Endothelial cell of umbilical vein (primary cell): ENCODE measurements at regions of chr18 and their contacts with region 1.

Region 1: GRCh38 chr18:21955757-21956652 is 213.4 kb upstream of the GATA6 start:
- DNase-seq: peak; percentile 66
- H3K4me3 ChIP-seq: no peak overlapping the region
- H3K27ac ChIP-seq: no peak overlapping the region
- H3K4me1 ChIP-seq: no peaks in the 10 kb centered on the region
- H3K27me3 ChIP-seq: peaks cover 3 to 8% of the 10 kb centered on the region in 2 experiments
- CTCF ChIP-seq: peak; percentile 86 to 94
- POLR2A ChIP-seq: no peak

Region 2: GRCh38 chr18:21865043-21865442 is 91.0 kb before region 1 on chr18:
- CTCF ChIA-PET with region 1: no interaction called
- POLR2A ChIA-PET with region 1: no interaction called
- dilution Hi-C with region 1: no loop called
- intact Hi-C with region 1: no loop called
- DNase-seq: no peak
- H3K4me3 ChIP-seq: no peak overlapping the region
- H3K27ac ChIP-seq: no peak overlapping the region
- H3K4me1 ChIP-seq: no peaks in the 10 kb centered on the region
- H3K27me3 ChIP-seq: no peaks in the 10 kb centered on the region
- CTCF ChIP-seq: no peak
- POLR2A ChIP-seq: no peak

Region 3: GRCh38 chr18:21897811-21898210 is 58.2 kb before region 1 on chr18:
- CTCF ChIA-PET with region 1: interaction called, 26 read pairs
- POLR2A ChIA-PET with region 1: no interaction called
- dilution Hi-C with region 1: no loop called
- intact Hi-C with region 1: loop called (anchors 1 kb)
- DNase-seq: peak; percentile 57
- H3K4me3 ChIP-seq: no peak overlapping the region
- H3K27ac ChIP-seq: no peak overlapping the region
- H3K4me1 ChIP-seq: peaks cover 9% of the 10 kb centered on the region
- H3K27me3 ChIP-seq: no peaks in the 10 kb centered on the region
- CTCF ChIP-seq: peak; percentile 71 to 74
- POLR2A ChIP-seq: no peak

Region 4: DNA sequence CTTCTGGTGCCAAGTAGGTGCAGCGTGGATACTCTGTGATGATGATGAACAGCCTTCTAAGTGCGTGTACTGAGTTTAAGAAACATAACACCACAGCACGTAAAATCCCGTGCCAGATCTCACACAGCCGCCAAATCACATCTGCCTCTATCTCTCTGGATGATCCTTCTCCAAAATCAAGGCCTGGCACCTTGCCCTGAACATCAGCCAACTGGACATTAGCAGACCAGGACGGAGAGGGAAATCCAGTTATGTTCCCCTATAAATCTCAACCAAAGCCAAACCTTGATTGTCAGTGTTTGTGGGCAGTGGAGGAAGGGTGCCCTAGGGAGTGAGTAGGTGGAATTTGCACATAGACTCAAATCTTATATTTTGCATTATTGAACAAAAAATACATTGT is 51.1 kb before region 1 on chr18:
- CTCF ChIA-PET with region 1: interaction called, 148 read pairs
- POLR2A ChIA-PET with region 1: no interaction called
- dilution Hi-C with region 1: no loop called
- intact Hi-C with region 1: no loop called
- DNase-seq: no peak
- H3K4me3 ChIP-seq: no peak overlapping the region
- H3K27ac ChIP-seq: no peak overlapping the region
- H3K4me1 ChIP-seq: no peaks in the 10 kb centered on the region
- H3K27me3 ChIP-seq: peaks cover 0 to 6% of the 10 kb centered on the region in 2 experiments
- CTCF ChIP-seq: no peak
- POLR2A ChIP-seq: no peak

Region 5: DNA sequence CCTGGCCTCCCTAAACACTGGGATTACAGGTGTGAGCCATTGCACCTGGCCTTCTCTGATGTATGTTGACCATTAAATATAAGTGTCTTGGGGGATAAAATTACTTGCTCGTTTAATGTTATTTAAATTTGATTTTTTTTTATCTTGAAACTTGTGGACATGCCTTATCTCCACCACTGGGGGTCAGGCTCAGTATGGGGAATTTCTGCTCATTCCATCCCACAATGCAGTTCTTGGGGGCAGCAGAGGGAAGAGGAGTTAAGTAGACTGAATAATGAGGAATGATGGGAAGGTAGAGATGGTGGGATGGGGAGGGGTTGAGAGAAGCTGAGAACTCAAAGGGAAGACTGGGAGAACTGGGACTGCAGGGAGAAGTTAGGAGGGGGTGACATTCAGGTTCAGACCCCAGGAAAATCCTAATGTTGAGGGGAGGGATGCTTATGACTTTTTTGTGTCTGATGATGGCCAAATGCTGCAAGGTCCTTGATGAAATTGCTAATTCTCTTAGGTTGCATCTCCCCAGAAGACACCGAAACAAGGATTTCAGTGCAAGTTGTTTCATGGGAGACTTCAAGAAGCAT is 41.2 kb before region 1 on chr18:
- CTCF ChIA-PET with region 1: interaction called, 148 read pairs
- POLR2A ChIA-PET with region 1: no interaction called
- dilution Hi-C with region 1: no loop called
- intact Hi-C with region 1: loop called (anchors 1 kb)
- DNase-seq: peak; percentile 81
- H3K4me3 ChIP-seq: no peak overlapping the region
- H3K27ac ChIP-seq: no peak overlapping the region
- H3K4me1 ChIP-seq: no peaks in the 10 kb centered on the region
- H3K27me3 ChIP-seq: peaks cover 4% of the 10 kb centered on the region in 2 experiments
- CTCF ChIP-seq: peak; percentile 63 to 66
- POLR2A ChIP-seq: no peak

Region 6: DNA sequence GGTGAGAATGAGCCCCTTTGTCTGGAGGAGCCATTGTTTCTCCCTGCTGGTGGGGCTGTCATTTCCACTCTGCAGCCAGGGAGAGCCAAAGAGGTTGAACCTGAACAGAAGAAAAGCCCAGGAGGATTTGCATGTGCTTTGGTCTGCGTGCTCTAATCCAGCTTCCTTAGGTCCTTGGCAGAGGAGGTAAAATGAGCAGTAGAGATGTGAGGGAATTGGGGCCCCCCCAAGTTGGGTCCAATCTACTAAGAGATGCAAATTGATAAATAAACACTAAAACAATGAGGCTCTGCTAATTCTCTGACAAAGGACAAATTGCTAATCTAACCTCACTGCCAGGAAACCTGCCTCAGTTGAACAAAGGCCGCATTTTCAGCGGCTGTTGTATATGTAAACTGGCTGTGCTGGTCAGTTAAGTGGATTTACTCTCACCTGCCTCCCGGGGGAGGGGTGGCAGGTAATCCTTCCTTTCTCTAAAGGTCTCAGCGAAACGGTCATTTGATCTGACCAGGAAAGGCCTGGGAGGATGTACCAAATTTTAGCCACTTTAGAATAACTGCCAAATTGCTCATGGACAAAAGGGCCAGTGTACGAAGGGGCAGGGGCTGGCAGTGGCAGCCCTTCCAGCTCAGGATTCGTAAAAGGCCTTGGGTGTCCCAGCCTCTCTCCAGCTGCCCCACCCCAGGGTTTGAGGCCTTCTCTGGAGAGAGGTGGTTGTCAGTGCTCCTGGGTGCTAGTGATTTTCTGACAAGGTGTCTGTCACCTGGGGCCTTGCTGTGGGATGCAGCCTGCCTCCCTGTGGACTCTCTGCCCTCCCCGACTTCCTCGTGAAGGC is 21.9 kb before region 1 on chr18:
- CTCF ChIA-PET with region 1: interaction called, 16 read pairs
- POLR2A ChIA-PET with region 1: no interaction called
- dilution Hi-C with region 1: no loop called
- intact Hi-C with region 1: no loop called
- DNase-seq: no peak
- H3K4me3 ChIP-seq: no peak overlapping the region
- H3K27ac ChIP-seq: no peak overlapping the region
- H3K4me1 ChIP-seq: peaks cover 5% of the 10 kb centered on the region
- H3K27me3 ChIP-seq: no peaks in the 10 kb centered on the region
- CTCF ChIP-seq: no peak
- POLR2A ChIP-seq: no peak

Region 7: DNA sequence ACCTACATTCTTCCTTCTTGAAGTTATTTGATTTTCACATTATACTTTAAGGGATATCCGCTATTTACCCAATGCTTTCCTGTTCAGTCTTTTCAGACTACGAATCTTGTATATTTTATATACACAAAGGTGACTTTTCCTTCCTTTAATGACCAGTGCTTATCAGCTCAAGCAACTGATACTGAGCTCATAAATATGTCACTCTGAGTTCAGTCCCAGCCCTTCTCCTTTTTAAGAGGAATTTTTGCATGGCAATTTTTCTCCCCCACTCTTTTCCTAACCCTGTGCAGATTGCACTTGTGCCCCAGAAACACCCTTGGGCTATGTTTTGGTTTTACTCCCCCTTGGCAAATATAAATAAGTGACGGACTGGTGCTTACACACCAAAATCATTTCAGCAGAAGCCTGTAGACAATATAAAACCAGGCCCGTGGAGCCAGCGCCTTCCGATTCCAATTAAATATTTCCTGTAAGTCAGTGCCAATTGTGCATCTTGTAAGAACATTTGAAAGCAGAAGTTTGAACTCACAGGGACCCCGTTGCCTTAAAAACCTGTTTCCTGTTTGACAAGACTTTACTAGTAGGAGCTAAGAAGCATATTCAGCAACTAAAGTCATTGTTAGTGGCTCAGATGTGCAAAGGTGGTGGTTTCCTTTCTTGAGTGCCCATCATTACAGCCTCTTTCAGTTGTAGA is 147.1 kb after region 1 on chr18:
- CTCF ChIA-PET with region 1: no interaction called
- POLR2A ChIA-PET with region 1: no interaction called
- dilution Hi-C with region 1: no loop called
- intact Hi-C with region 1: no loop called
- DNase-seq: peak; percentile 94
- H3K4me3 ChIP-seq: no peak overlapping the region
- H3K27ac ChIP-seq: peak overlapping the region; percentile 53
- H3K4me1 ChIP-seq: peaks cover 22% of the 10 kb centered on the region
- H3K27me3 ChIP-seq: peaks cover 18 to 20% of the 10 kb centered on the region in 2 experiments
- CTCF ChIP-seq: no peak
- POLR2A ChIP-seq: no peak